PC-9 (cell line): ENCODE measurements at regions of chr7 and their contacts with region 1.

Region 1: GRCh38 chr7:142782922-142783900 is 12.4 kb downstream of the PRSS2 start:
- DNase-seq: peak; percentile 88 to 93
- H3K4me3 ChIP-seq: peak overlapping the region; percentile 41; the same call in 1 of the 2 replicates
- H3K27ac ChIP-seq: no peak overlapping the region
- H3K4me1 ChIP-seq: peaks cover 10% of the 10 kb centered on the region
- H3K27me3 ChIP-seq: no peaks in the 10 kb centered on the region
- CTCF ChIP-seq: peak; percentile 99

Region 2: GRCh38 chr7:142338633-142339501 is 444.3 kb before region 1 on chr7:
- CTCF ChIA-PET with region 1: interaction called, 29 read pairs
- POLR2A ChIA-PET with region 1: no interaction called
- intact Hi-C with region 1: loop called (anchors 1 kb)
- DNase-seq: peak; percentile 61 to 88
- H3K4me3 ChIP-seq: no peak overlapping the region
- H3K27ac ChIP-seq: no peak overlapping the region
- H3K4me1 ChIP-seq: no peaks in the 10 kb centered on the region
- H3K27me3 ChIP-seq: no peaks in the 10 kb centered on the region
- CTCF ChIP-seq: peak; percentile 76

Region 3: GRCh38 chr7:142459551-142459963 is 323.7 kb before region 1 on chr7:
- CTCF ChIA-PET with region 1: interaction called, 7 read pairs
- POLR2A ChIA-PET with region 1: no interaction called
- intact Hi-C with region 1: loop called (anchors 1 kb)
- DNase-seq: peak; percentile 82 to 96
- H3K4me3 ChIP-seq: no peak overlapping the region
- H3K27ac ChIP-seq: peak overlapping the region; percentile 45
- H3K4me1 ChIP-seq: peaks cover 26% of the 10 kb centered on the region
- H3K27me3 ChIP-seq: no peaks in the 10 kb centered on the region
- CTCF ChIP-seq: peak; percentile 91

Region 4: GRCh38 chr7:142587578-142588191 is 195.5 kb before region 1 on chr7:
- CTCF ChIA-PET with region 1: interaction called, 10 read pairs
- POLR2A ChIA-PET with region 1: no interaction called
- intact Hi-C with region 1: no loop called
- DNase-seq: peak; percentile 30 to 77
- H3K4me3 ChIP-seq: no peak overlapping the region
- H3K27ac ChIP-seq: 0 out of 2 replicates have a peak overlapping the region, but pooled peaks have one; percentile 27
- H3K4me1 ChIP-seq: peaks cover 26% of the 10 kb centered on the region
- H3K27me3 ChIP-seq: no peaks in the 10 kb centered on the region
- CTCF ChIP-seq: peak; percentile 78

Region 5: DNA sequence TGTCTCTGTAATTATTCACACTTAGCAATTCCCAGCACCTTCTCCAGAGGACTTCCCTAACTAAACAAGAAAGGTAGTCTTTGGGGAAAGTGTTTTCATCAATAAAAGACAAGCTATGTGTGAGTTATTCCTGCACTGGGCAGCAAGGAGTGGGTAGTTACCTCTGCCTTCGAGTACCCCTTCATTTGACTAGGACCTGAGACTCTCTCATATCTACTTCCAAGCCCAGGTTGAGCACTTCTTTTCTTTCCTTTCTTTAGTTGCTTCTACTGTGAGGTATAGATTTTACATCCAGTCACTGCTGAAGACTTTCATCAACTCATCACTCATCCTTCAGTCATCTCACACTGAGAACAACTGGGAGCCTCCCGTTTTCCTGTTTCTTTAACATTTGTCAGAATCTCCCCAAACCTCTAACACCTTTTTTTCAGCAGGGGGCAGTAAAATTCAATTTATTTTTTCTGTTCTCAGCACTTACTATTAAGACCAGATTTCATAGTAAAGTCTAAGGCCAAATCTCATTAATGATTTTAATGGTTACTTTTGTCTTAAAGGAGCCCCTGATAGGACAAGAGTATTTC is 114.0 kb before region 1 on chr7:
- CTCF ChIA-PET with region 1: no interaction called
- POLR2A ChIA-PET with region 1: no interaction called
- intact Hi-C with region 1: no loop called
- DNase-seq: no peak
- H3K4me3 ChIP-seq: no peak overlapping the region
- H3K27ac ChIP-seq: no peak overlapping the region
- H3K4me1 ChIP-seq: no peaks in the 10 kb centered on the region
- H3K27me3 ChIP-seq: no peaks in the 10 kb centered on the region
- CTCF ChIP-seq: peak; percentile 70

Region 6: GRCh38 chr7:142796608-142797385 is 13.6 kb after region 1 on chr7:
- CTCF ChIA-PET with region 1: interaction called, 14 read pairs
- POLR2A ChIA-PET with region 1: no interaction called
- intact Hi-C with region 1: no loop called
- DNase-seq: peak; percentile 35 to 36
- H3K4me3 ChIP-seq: peak overlapping the region; percentile 93
- H3K27ac ChIP-seq: peak overlapping the region; percentile 92
- H3K4me1 ChIP-seq: peaks cover 55% of the 10 kb centered on the region
- H3K27me3 ChIP-seq: no peaks in the 10 kb centered on the region
- CTCF ChIP-seq: no peak

Region 7: DNA sequence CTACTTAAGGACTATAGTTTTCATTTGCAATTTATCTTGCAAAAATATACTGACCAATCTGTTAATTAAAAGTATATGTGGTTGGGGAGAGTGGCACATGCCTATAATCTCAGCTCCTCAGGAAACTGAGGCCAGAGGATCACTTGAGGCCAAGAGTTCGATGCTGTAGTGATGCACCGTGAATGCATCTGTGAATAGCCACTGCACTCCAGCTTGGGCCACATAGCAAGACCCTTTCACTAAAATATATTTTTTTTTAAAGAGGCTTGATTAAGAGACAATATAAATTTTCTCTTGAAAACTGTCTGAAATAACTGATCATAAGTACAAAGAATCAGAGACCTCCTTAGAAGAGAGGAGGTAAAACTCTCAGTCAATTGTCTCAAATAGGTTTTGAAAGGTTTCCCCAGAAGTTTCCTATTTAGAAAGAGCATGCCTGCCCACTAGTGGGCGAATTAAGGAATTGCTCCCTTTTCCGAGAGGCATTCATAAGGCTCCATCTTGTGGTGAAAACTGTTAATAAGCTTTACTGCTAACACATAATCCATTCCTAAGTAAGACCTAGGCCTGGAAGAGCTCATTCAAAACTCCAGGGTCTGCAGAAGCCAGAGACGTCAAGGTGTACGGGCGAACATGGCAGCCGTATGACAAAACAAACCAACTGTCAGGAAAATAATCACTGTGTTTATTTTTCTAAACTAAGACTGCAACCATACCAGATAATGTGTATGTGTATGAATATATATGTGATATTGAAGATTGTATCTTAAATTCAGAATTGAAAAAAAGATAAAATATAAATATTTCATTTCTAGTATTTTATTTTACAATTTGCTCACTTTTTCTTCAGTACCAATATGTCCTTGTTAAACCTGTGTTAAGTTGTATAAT is 431.8 kb after region 1 on chr7:
- CTCF ChIA-PET with region 1: interaction called, 11 read pairs
- POLR2A ChIA-PET with region 1: no interaction called
- intact Hi-C with region 1: no loop called
- DNase-seq: peak; percentile 61 to 76
- H3K4me3 ChIP-seq: no peak overlapping the region
- H3K27ac ChIP-seq: no peak overlapping the region
- H3K4me1 ChIP-seq: no peaks in the 10 kb centered on the region
- H3K27me3 ChIP-seq: no peaks in the 10 kb centered on the region
- CTCF ChIP-seq: peak; percentile 100